B cell (primary cell): ENCODE measurements at regions of chr3 and their contacts with region 1.

Region 1: DNA sequence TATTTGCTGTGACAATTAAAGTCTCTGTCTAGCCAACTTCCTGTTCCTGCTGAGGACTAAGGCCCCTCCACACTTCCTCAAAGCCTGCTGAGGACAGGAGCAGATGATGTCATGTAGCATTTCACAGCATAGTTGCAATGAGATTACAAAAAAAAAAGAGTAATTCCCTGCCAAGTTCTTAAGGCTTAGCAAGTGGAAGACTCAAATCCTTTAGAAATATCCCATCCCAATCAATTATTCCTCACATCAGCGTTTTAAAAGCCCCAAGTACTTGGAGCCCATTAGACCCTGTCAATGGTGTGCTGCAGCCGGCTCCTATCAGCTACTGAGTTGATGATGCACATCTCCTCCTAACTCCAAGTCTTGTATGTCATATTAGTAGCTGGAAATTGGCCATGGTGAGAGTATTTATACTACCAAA is 51.7 kb downstream of the TRANK1 start:
- DNase-seq: peak; percentile 83
- ATAC-seq: peak; percentile 50
- H3K4me3 ChIP-seq: peak overlapping the region in 1 of 5 experiments; percentile 4
- H3K4me3 Mint-ChIP-seq: peak overlapping the region; percentile 70
- H3K27ac ChIP-seq: peak overlapping the region; percentile 84 to 97
- H3K27ac Mint-ChIP-seq: peak overlapping the region; percentile 97
- H3K4me1 ChIP-seq: peaks cover 78% of the 10 kb centered on the region in 2 donors
- H3K4me1 Mint-ChIP-seq: peaks cover 84% of the 10 kb centered on the region
- H3K27me3 ChIP-seq: no peaks in the 10 kb centered on the region
- H3K27me3 Mint-ChIP-seq: no peaks in the 10 kb centered on the region
- CTCF ChIP-seq: no peak

Region 2: DNA sequence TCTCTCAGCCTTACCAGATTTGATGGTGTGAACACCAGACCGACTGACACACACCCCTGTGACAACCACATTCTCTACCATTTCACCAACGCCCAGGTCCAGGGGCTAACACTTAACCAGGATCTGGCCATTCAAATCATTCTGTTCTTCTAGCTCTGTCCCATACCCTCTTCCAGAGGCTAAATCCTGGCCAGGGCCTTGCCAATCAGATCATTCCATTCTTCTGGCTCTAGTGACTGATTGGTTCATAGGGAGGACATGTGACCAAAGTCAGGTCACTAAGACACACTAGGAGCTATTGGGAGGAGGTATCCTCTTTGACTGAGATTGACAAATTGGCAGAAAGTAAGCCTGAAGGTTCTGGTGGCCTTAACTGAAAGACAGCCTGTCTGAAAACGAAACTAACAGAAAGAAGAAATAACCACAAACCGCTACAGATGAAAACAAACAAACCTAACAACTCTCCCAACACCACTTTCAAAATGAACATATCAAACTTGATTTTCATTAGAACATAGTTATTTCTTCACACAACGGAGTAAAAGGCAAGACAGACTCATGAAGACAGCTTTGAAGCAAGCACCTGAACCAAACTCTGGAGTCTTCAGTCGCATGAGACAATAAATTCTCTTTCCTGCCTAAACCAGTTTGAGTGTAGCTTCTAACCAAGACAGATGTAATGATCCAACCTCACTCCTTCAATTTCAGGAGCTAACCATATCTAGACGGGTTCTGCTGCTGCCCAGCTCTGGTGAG is 16.8 kb before region 1 on chr3:
- CTCF ChIA-PET with region 1: interaction called, 21 read pairs
- POLR2A ChIA-PET with region 1: interaction called, 8 read pairs
- intact Hi-C with region 1: loop called (anchors 2 kb)
- DNase-seq: peak; percentile 71
- ATAC-seq: peak; percentile 90
- H3K4me3 ChIP-seq: peak overlapping the region; percentile 4 to 58 (median 40)
- H3K4me3 Mint-ChIP-seq: peak overlapping the region; percentile 84
- H3K27ac ChIP-seq: peak overlapping the region; percentile 89 to 92
- H3K27ac Mint-ChIP-seq: peak overlapping the region; percentile 93
- H3K4me1 ChIP-seq: peaks cover 21 to 22% of the 10 kb centered on the region in 2 donors
- H3K4me1 Mint-ChIP-seq: peaks cover 47% of the 10 kb centered on the region
- H3K27me3 ChIP-seq: no peaks in the 10 kb centered on the region
- H3K27me3 Mint-ChIP-seq: no peaks in the 10 kb centered on the region
- CTCF ChIP-seq: no peak

Region 3: GRCh38 chr3:36944012-36944640 is 51.0 kb after region 1 on chr3:
- CTCF ChIA-PET with region 1: interaction called, 4 read pairs
- POLR2A ChIA-PET with region 1: interaction called, 6 read pairs
- intact Hi-C with region 1: loop called (anchors 1 kb)
- DNase-seq: no peak
- ATAC-seq: peak; percentile 39
- H3K4me3 ChIP-seq: peak overlapping the region; percentile 22 to 79 (median 76)
- H3K4me3 Mint-ChIP-seq: peak overlapping the region; percentile 90
- H3K27ac ChIP-seq: peak overlapping the region in 1 of 2 donors; percentile 76
- H3K27ac Mint-ChIP-seq: peak overlapping the region; percentile 78
- H3K4me1 ChIP-seq: peaks cover 6 to 14% of the 10 kb centered on the region in 2 donors
- H3K4me1 Mint-ChIP-seq: peaks cover 16% of the 10 kb centered on the region
- H3K27me3 ChIP-seq: no peaks in the 10 kb centered on the region
- H3K27me3 Mint-ChIP-seq: no peaks in the 10 kb centered on the region
- CTCF ChIP-seq: no peak

Region 4: DNA sequence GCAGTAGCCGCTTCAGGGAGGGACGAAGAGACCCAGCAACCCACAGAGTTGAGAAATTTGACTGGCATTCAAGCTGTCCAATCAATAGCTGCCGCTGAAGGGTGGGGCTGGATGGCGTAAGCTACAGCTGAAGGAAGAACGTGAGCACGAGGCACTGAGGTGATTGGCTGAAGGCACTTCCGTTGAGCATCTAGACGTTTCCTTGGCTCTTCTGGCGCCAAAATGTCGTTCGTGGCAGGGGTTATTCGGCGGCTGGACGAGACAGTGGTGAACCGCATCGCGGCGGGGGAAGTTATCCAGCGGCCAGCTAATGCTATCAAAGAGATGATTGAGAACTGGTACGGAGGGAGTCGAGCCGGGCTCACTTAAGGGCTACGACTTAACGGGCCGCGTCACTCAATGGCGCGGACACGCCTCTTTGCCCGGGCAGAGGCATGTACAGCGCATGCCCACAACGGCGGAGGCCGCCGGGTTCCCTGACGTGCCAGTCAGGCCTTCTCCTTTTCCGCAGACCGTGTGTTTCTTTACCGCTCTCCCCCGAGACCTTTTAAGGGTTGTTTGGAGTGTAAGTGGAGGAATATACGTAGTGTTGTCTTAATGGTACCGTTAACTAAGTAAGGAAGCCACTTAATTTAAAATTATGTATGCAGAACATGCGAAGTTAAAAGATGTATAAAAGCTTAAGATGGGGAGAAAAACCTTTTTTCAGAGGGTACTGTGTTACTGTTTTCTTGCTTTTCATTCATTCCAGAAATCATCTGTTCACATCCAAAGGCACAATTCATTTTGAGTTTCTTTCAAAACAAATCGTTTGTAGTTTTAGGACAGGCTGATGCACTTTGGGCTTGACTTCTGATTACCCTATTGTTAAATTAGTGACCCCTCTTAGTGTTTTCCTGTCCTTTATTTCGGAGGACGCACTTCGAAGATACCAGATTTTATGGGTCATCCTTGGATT is 100.5 kb after region 1 on chr3 and contains the start of gene MLH1:
- CTCF ChIA-PET with region 1: interaction called, 11 read pairs
- POLR2A ChIA-PET with region 1: interaction called, 6 read pairs
- intact Hi-C with region 1: loop called (anchors 2 kb)
- DNase-seq: peak; percentile 100
- ATAC-seq: peak; percentile 85
- H3K4me3 ChIP-seq: peak within 1 kb of the TSS; percentile 72 to 86 (median 76)
- H3K4me3 Mint-ChIP-seq: no peak within 1 kb of the TSS
- H3K27ac ChIP-seq: peak within 1 kb of the TSS; percentile 97 to 98
- H3K27ac Mint-ChIP-seq: no peak within 1 kb of the TSS
- H3K4me1 ChIP-seq: peaks cover 39 to 46% of the 10 kb centered on the region in 2 donors
- H3K4me1 Mint-ChIP-seq: peaks cover 38% of the 10 kb centered on the region
- H3K27me3 ChIP-seq: no peaks in the 10 kb centered on the region
- H3K27me3 Mint-ChIP-seq: no peaks in the 10 kb centered on the region
- CTCF ChIP-seq: no peak
- total RNA-seq, gene MLH1: 38.5 and 46.3 TPM in 2 replicates